Ascending aorta (tissue), 2 donors: ENCODE measurements at regions of chr6 and their contacts with region 1.

Region 1: DNA sequence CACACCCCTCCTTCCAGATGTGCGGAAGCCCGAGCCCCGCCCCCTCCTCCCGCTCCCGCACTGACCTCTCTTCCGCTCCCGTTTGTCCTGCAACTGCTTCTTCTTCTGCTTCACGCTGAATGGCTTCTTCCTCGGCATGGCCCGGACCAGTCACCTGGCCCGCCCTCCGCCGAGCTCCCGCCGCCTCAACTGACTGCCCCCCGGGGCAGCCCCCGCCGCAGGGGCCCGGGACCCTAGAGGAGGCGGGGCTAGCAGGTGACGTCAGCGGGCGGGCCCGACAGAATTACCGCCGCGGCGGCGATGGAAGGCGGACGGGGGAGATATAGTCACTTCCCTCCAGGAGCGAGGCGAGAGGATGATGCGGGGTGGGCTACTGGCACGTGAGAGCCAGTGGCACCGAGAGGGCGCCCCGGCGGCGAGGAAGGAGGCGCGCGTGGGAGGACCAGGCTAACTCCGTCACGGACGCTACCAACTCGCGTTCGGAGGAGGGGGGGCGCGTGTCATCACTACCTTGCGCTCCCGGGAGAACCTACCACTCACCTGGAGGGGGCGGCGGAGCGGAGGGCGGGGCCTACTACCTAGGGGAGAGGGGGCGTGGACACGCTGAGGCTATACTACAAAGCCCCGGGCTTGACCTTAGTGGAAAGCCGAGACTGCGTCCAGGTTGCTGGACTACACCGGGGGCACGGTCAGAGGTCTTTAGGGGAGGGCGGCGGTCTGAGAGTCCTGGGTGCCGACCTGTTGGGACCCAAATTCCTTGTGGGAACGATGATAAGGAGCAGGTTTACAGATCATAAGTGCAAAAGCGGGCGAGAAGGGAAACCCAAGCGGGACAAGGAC is at the start of gene GNL1:
- DNase-seq: peak; percentile 80 to 97
- H3K4me3 ChIP-seq: peak within 1 kb of the TSS; percentile 80 to 85
- H3K27ac ChIP-seq: peak within 1 kb of the TSS; percentile 98 to 100
- H3K4me1 ChIP-seq: peaks cover 5 to 19% of the 10 kb centered on the region in 2 donors
- H3K27me3 ChIP-seq: no peaks in the 10 kb centered on the region
- CTCF ChIP-seq: no peak
- total RNA-seq, gene GNL1: 33.0 TPM

Region 2: DNA sequence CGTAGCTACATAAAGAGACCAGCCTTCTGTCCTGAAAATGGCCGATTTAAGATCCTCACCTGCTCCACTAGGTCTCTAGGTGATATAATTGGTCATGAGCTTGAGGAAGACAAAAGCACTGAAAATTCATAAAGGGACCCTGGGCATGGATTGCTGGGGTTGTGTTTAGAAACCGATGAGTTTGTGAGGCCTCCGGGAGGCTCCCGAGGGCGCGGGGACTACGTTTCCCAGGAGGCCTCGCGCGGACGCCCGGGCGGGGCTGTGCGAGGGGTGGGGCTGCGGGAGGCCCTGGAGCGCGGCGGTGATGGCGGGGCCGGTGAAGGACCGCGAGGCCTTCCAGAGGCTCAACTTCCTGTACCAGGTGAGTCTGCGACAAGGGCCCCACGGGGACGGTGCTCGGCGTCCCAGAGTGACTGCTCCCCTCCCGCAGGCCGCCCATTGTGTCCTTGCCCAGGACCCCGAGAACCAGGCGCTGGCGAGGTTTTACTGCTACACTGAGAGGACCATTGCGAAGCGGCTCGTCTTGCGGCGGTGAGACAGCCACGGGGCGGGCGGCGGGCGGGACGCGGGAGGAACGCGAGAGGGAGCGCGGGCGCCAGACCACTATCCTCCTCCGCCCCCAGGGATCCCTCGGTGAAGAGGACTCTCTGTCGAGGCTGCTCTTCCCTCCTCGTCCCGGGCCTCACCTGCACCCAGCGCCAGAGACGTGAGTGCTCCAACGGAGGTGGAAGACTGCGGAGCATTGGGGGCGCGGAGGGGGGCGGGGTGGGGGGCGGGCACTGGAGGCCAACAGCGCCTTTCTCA is 211.2 kb before region 1 on chr6 and contains the start of gene RPP21:
- intact Hi-C with region 1: loop called (anchors 10 kb)
- DNase-seq: peak; percentile 28 to 88
- H3K4me3 ChIP-seq: peak within 1 kb of the TSS; percentile 79 to 85
- H3K27ac ChIP-seq: peak within 1 kb of the TSS; percentile 85 to 86
- H3K4me1 ChIP-seq: peaks cover 0 to 4% of the 10 kb centered on the region in 2 donors
- H3K27me3 ChIP-seq: no peaks in the 10 kb centered on the region
- CTCF ChIP-seq: no peak
- total RNA-seq, gene RPP21: 262 TPM

Region 3: DNA sequence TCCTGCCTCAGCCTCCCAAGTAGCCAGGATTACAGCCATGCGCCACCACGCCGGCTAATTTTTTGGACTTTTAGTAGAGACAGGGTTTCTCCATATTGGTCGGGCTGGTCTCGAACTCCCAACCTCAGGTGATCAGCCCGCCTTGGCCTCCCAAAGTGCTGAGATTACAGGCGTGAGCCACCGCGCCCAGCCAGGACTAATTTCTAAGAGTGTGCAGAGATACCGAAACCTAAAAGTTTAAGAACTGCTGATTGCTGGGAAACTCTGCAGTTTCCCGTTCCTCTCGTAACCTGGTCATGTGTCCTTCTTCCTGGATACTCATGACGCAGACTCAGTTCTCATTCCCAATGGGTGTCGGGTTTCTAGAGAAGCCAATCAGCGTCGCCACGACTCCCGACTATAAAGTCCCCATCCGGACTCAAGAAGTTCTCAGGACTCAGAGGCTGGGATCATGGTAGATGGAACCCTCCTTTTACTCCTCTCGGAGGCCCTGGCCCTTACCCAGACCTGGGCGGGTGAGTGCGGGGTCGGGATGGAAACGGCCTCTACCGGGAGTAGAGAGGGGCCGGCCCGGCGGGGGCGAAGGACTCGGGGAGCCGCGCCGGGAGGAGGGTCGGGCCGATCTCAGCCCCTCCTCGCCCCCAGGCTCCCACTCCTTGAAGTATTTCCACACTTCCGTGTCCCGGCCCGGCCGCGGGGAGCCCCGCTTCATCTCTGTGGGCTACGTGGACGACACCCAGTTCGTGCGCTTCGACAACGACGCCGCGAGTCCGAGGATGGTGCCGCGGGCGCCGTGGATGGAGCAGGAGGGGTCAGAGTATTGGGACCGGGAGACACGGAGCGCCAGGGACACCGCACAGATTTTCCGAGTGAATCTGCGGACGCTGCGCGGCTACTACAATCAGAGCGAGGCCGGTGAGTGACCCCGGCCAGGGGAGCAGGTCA is 66.9 kb before region 1 on chr6 and contains the start of gene HLA-E:
- intact Hi-C with region 1: loop called (anchors 2 kb)
- DNase-seq: peak; percentile 90 to 99
- H3K4me3 ChIP-seq: peak within 1 kb of the TSS; percentile 91 to 97
- H3K27ac ChIP-seq: peak within 1 kb of the TSS; percentile 98 to 99
- H3K4me1 ChIP-seq: peaks cover 6 to 14% of the 10 kb centered on the region in 2 donors
- H3K27me3 ChIP-seq: no peaks in the 10 kb centered on the region
- CTCF ChIP-seq: no peak
- total RNA-seq, gene HLA-E: 896 TPM

Region 4: GRCh38 chr6:30571075-30571768 is 14.9 kb after region 1 on chr6 and contains the start of gene ABCF1:
- intact Hi-C with region 1: loop called (anchors 1 kb)
- DNase-seq: peak; percentile 89 to 99
- H3K4me3 ChIP-seq: peak within 1 kb of the TSS; percentile 72 to 91
- H3K27ac ChIP-seq: peak within 1 kb of the TSS; percentile 89 to 92
- H3K4me1 ChIP-seq: peaks cover 9 to 19% of the 10 kb centered on the region in 2 donors
- H3K27me3 ChIP-seq: no peaks in the 10 kb centered on the region
- CTCF ChIP-seq: no peak
- total RNA-seq, gene ABCF1: 36.6 TPM

Region 5: DNA sequence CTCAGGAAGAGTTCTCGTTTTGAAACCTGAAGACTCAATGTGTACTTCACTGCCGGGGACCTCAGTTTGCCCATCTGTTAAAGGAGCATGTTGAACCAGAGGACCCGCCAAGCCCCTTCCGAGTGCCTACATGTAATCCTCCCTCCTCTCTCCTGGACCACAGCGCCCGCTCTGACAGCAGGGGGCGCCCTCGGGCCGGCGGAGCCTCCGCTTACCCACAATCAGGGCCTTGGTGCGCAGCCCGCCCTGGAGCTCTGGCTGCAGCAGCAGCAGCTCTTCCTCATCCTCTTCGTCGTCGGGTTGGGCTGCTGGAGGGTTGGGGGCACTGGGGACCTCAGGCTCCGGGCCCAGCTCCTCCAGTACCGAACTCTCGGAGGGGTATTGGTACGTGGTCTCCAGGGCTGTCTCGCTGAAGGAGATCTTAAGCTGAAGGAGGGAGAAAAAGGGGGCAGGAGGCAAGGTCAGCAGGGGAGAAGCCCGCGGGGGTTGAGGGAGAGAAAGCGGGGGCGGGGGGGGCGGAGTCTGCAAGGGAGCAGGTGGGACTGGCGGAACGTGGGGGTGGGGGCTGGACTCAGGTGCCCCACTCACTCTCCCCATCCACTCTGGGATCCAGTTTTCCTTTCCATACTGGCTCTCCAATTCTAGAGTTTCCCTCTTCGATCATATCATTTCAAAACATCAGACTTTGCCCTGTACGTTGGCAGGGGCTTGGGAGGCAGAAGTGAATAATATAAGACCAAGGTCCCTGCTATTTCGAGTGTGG is 122.9 kb after region 1 on chr6:
- intact Hi-C with region 1: loop called (anchors 5 kb)
- DNase-seq: peak; percentile 38 to 93
- H3K4me3 ChIP-seq: peak overlapping the region; percentile 32 to 91
- H3K27ac ChIP-seq: peak overlapping the region; percentile 99
- H3K4me1 ChIP-seq: peaks cover 11 to 35% of the 10 kb centered on the region in 2 donors
- H3K27me3 ChIP-seq: no peaks in the 10 kb centered on the region
- CTCF ChIP-seq: peak; percentile 94 to 98 (median 97)